ENCODE measurements at regions of chr1 and their contacts with region 1.

Region 1: DNA sequence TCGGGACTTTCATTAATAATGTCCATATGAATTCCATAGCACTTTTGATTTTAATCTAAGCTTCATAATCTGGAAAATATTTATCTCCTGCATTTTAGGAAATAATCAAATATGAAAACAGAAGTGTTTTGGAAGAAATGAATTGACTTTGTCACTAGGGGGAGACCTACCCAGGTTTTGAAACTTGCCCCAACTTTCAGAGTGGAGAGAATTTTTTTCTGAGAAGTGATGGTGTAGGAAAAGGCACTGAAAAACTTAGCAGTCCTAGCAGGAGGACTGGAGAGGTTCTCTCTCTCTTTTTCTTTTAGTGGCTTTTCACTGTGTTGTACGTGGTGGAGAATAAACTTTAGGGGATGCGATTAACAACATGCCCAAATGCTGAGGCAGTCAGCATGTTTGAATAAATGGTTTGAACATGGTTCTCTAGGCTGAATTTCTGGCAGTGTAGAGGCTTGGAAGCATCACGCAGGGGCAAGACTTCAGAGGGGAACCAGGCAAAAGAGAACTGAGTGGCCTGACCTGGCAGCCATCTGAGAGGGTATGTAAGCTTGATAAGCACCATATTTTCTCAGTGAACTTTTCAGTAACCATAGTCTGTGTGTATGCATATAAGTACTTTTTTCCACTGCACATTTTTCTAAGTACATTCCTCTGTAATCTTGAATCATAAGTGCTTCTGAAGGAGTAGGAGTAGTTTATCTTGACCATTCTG is 68.3 kb upstream of the NEK7 start:
- DNase-seq: no peak
- H3K4me3 ChIP-seq: no peak overlapping the region
- H3K27ac ChIP-seq: no peak overlapping the region
- H3K4me1 ChIP-seq: no peaks in the 10 kb centered on the region
- H3K27me3 ChIP-seq: no peaks in the 10 kb centered on the region
- CTCF ChIP-seq: peak; percentile 41

Region 2: GRCh38 chr1:197890936-197891335 is 197.6 kb before region 1 on chr1:
- intact Hi-C with region 1: no loop called
- DNase-seq: no peak
- H3K4me3 ChIP-seq: no peak overlapping the region
- H3K27ac ChIP-seq: no peak overlapping the region
- H3K4me1 ChIP-seq: no peaks in the 10 kb centered on the region
- H3K27me3 ChIP-seq: no peaks in the 10 kb centered on the region
- CTCF ChIP-seq: no peak

Region 3: DNA sequence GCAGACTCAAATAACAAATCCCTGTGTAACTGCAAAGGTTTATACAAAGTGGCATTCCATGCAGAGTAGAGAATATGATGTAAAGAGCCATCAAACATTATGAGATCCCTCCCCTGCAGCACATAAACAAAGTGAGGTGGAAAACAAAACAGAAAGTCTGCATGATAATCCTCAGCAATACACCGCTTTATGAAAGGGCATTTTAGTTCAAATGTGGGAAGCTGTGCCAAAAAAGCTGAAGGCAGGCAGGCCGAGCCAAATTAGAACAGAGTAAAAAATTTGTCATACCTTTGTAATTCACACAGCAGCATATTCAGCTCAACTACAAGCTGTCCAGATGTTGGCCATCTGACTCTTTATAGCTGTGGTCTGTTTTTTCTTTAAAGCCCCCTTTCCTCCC is 57.8 kb before region 1 on chr1:
- intact Hi-C with region 1: no loop called
- DNase-seq: no peak
- H3K4me3 ChIP-seq: no peak overlapping the region
- H3K27ac ChIP-seq: no peak overlapping the region
- H3K4me1 ChIP-seq: no peaks in the 10 kb centered on the region
- H3K27me3 ChIP-seq: no peaks in the 10 kb centered on the region
- CTCF ChIP-seq: no peak

Region 4: DNA sequence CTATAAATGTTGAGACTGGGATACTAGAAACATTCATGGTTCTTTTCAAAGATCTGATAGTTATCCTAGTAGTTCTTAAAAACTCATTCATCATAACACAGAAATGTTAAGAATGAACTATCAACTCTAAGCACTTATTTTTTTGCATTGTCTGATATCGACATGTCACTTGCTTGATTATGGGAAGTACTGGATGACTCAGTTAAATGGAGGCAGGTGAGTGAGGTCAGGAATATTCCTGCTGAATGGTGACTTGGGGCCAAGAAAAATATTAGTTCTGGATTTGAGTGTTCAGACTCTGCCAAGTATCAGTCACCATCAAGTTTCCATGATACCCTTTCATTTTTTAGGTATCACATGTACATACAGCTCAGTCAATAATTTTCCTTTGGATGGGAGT is 131.9 kb after region 1 on chr1:
- intact Hi-C with region 1: no loop called
- DNase-seq: no peak
- H3K4me3 ChIP-seq: no peak overlapping the region
- H3K27ac ChIP-seq: no peak overlapping the region
- H3K4me1 ChIP-seq: no peaks in the 10 kb centered on the region
- H3K27me3 ChIP-seq: no peaks in the 10 kb centered on the region
- CTCF ChIP-seq: no peak

Region 5: DNA sequence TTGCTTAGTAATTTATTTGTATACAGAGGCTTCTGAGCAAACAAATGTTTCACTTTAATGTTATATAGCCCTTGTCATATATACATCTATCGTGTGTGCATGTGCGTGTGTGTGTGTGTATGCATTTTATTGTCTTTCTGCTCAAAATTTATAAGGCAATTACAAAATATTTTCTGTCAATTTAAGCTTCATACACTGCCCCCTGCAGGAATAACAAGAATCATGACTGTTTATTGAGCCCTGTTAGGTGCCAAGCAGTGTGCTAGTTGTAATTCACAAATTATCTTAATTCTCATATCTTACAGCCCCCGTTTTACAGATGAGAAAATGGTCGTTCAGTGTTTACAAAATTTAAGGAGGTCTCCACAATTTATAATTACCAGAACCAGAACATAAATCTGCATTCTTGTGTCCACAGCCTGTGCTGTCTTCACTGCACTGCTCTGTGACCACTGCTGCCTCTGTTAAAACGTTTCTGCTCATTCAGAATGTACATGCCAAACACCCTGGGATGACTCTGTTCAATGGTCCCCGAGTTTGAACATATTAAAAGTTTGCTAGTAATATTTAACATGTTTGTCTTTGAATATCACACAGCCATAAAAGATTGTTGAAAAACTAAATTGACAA is 270.6 kb after region 1 on chr1:
- intact Hi-C with region 1: loop called (anchors 5 kb)
- DNase-seq: no peak
- H3K4me3 ChIP-seq: no peak overlapping the region
- H3K27ac ChIP-seq: no peak overlapping the region
- H3K4me1 ChIP-seq: no peaks in the 10 kb centered on the region
- H3K27me3 ChIP-seq: no peaks in the 10 kb centered on the region
- CTCF ChIP-seq: peak; percentile 23

Region 6: DNA sequence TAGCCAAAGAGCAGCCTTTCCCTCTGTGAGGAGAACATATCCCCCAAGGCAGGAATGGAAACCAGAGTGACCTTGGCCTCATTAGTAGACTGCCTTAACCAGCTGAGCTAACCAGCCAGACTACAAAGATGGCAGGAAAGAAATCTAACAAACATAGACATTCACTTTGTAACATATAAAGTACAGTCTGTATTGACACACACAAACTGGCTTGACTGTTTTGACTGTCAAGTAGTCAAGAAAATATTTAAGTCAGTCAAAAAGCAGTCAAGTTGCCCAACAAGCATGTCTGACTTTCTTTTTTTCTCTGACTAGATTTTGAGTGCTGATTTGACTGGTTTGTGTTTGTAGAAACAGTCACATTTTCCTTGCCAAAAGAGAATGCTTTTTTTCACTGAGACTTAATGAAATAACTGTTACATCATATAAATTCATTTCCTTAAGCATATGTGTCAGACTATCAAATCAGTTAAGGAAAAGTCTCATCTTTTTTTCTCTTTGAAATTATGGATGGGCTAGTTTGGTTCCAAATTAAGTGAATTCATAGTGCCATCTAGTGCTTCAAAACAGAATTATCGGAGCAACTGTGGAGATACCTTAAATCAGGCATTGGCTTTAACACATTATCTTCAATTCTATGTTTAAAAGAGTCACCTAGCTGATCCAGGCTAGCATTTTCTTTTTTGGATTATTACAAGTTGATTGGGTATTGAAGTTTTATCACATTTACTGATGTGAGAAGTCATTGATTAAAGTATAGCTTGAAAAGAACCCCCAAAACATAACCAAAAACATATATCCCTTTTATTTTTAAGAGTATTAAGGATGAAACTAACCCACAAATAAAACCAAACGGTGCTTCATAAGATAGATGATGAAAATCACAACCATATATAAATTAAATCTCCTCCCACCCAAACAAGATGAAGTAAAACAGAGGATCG is 377.0 kb after region 1 on chr1:
- intact Hi-C with region 1: loop called (anchors 5 kb)
- DNase-seq: no peak
- H3K4me3 ChIP-seq: no peak overlapping the region
- H3K27ac ChIP-seq: no peak overlapping the region
- H3K4me1 ChIP-seq: no peaks in the 10 kb centered on the region
- H3K27me3 ChIP-seq: no peaks in the 10 kb centered on the region
- CTCF ChIP-seq: peak; percentile 57

Measured in colonic mucosa (tissue), 4 donors.